Vagina (tissue), 2 donors: ENCODE measurements at regions of chr16 and their contacts with region 1.

Region 1: GRCh38 chr16:62794724-62795123 is 758.5 kb upstream of the CDH8 start:
- DNase-seq: no peak
- H3K4me3 ChIP-seq: no peak overlapping the region
- H3K27ac ChIP-seq: no peak overlapping the region
- H3K4me1 ChIP-seq: no peaks in the 10 kb centered on the region
- H3K27me3 ChIP-seq: no peaks in the 10 kb centered on the region
- CTCF ChIP-seq: no peak
- POLR2A ChIP-seq: no peak

Region 2: DNA sequence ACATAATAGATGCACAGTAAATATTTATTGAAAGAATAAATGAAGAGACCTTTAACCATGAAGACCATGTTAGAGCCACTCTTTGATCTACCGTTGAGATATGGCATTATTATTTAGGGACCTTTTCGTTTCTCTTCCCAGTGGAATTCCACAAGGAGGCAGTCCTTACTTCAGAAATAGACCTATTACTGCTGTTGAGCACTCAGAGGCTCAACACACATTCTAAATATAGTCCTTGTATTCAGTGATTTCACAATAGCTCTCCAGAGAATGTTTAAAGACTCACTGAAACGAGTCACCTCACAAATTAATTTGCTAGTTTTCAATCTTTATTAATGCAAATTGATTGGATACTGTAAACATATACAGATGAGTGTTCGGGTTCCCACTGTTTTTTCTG is 1362.3 kb before region 1 on chr16:
- intact Hi-C with region 1: no loop called
- DNase-seq: no peak
- H3K4me3 ChIP-seq: no peak overlapping the region
- H3K27ac ChIP-seq: no peak overlapping the region
- H3K4me1 ChIP-seq: no peaks in the 10 kb centered on the region
- H3K27me3 ChIP-seq: no peaks in the 10 kb centered on the region
- CTCF ChIP-seq: no peak
- POLR2A ChIP-seq: no peak

Region 3: DNA sequence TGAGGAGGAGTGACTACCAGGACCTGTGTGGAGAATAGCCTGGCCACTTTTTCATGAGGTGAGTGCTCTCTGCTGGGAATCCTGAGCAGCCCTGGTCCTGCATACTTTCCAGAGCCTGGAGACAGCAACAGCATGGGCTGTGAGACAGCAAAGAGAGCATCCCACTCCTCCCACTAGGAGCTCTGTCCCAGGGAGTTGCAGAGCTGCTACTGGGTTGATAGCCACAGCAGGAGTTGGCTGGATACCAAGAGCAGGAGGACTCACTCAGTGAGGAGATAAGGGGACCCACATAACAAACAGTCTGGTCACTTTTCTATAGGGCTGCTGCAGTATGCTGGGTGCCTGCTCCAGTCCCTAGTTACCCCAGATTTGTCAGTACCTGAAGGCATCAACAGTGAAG is 319.2 kb before region 1 on chr16:
- intact Hi-C with region 1: loop called (anchors 10 kb)
- DNase-seq: no peak
- H3K4me3 ChIP-seq: no peak overlapping the region
- H3K27ac ChIP-seq: no peak overlapping the region
- H3K4me1 ChIP-seq: no peaks in the 10 kb centered on the region
- H3K27me3 ChIP-seq: no peaks in the 10 kb centered on the region
- CTCF ChIP-seq: no peak
- POLR2A ChIP-seq: no peak

Region 4: DNA sequence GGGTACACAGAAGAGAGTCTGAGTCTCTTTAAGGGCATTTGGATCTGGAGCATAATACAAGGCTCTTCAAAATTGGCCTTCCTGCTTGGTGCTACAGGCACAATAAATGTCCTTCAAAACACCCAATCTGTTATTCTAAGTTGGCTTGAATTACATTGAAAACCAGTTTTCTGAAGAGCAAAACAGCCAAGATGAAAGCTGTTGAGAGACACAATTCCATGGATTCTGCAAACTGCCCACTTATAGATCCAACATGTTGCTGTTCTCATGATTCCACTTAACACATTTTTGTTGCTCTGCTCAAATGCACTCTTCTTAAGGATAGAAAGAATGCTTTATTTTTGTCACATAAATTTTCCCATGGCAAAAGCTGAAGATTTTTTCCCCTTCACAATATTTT is 232.6 kb before region 1 on chr16:
- intact Hi-C with region 1: no loop called
- DNase-seq: no peak
- H3K4me3 ChIP-seq: no peak overlapping the region
- H3K27ac ChIP-seq: no peak overlapping the region
- H3K4me1 ChIP-seq: no peaks in the 10 kb centered on the region
- H3K27me3 ChIP-seq: no peaks in the 10 kb centered on the region
- CTCF ChIP-seq: no peak
- POLR2A ChIP-seq: no peak

Region 5: GRCh38 chr16:62610291-62610690 is 184.4 kb before region 1 on chr16:
- intact Hi-C with region 1: no loop called
- DNase-seq: no peak
- H3K4me3 ChIP-seq: no peak overlapping the region
- H3K27ac ChIP-seq: no peak overlapping the region
- H3K4me1 ChIP-seq: no peaks in the 10 kb centered on the region
- H3K27me3 ChIP-seq: no peaks in the 10 kb centered on the region
- CTCF ChIP-seq: no peak
- POLR2A ChIP-seq: no peak